Activated CD4-positive, alpha-beta memory T cell treated with anti-CD3 and anti-CD28 coated beads for 36 hours (primary cell): ENCODE measurements at regions of chr7 and their contacts with region 1.

Region 1: GRCh38 chr7:142459551-142459963 is 201.7 kb upstream of the PRSS58 start:
- DNase-seq: peak; percentile 49
- H3K4me3 Mint-ChIP-seq: no peak overlapping the region
- H3K27ac Mint-ChIP-seq: peak overlapping the region; percentile 39
- H3K4me1 Mint-ChIP-seq: peaks cover 59% of the 10 kb centered on the region
- H3K27me3 Mint-ChIP-seq: no peaks in the 10 kb centered on the region

Region 2: GRCh38 chr7:142359694-142360279 is 99.8 kb before region 1 on chr7:
- CTCF ChIA-PET with region 1: no interaction called
- POLR2A ChIA-PET with region 1: no interaction called
- intact Hi-C with region 1: no loop called
- DNase-seq: no peak
- H3K4me3 Mint-ChIP-seq: no peak overlapping the region
- H3K27ac Mint-ChIP-seq: no peak overlapping the region
- H3K4me1 Mint-ChIP-seq: peaks cover 27% of the 10 kb centered on the region
- H3K27me3 Mint-ChIP-seq: peaks cover 5% of the 10 kb centered on the region

Region 3: GRCh38 chr7:142438235-142438922 is 21.2 kb before region 1 on chr7:
- CTCF ChIA-PET with region 1: interaction called, 10 read pairs
- POLR2A ChIA-PET with region 1: no interaction called
- intact Hi-C with region 1: loop called (anchors 2 kb)
- DNase-seq: peak; percentile 45
- H3K4me3 Mint-ChIP-seq: no peak overlapping the region
- H3K27ac Mint-ChIP-seq: no peak overlapping the region
- H3K4me1 Mint-ChIP-seq: peaks cover 55% of the 10 kb centered on the region
- H3K27me3 Mint-ChIP-seq: no peaks in the 10 kb centered on the region

Region 4: GRCh38 chr7:142469696-142470543 is 10.4 kb after region 1 on chr7:
- CTCF ChIA-PET with region 1: interaction called, 324 read pairs
- POLR2A ChIA-PET with region 1: no interaction called
- intact Hi-C with region 1: no loop called
- DNase-seq: no peak
- H3K4me3 Mint-ChIP-seq: no peak overlapping the region
- H3K27ac Mint-ChIP-seq: no peak overlapping the region
- H3K4me1 Mint-ChIP-seq: peaks cover 45% of the 10 kb centered on the region
- H3K27me3 Mint-ChIP-seq: no peaks in the 10 kb centered on the region

Region 5: DNA sequence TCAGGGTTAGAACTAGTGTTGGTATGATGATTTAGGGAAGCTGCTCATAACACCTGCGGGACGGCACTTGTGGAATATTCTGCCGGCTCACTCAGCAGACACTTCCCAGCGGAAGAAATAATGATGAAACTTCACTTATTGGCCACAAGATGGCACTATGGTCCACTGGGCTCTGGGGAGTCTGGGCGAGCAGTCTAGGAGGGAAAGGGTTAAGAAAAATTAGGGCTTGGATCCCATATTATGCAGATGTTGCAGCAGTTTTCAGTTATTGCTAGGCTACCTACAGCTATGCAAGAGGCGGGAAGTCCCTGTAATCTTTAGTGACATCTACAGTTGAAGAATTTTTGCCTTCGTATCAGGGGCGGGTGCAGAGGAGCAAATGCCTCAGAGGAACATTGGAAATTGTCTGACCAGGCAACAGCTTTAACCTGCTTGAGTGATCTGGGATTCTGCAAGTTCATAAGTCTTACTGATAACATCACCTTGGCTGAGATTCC is 37.0 kb after region 1 on chr7:
- CTCF ChIA-PET with region 1: interaction called, 19 read pairs
- POLR2A ChIA-PET with region 1: no interaction called
- intact Hi-C with region 1: loop called (anchors 5 kb)
- DNase-seq: peak; percentile 39
- H3K4me3 Mint-ChIP-seq: peak overlapping the region; percentile 47
- H3K27ac Mint-ChIP-seq: peak overlapping the region; percentile 7
- H3K4me1 Mint-ChIP-seq: peaks cover 34% of the 10 kb centered on the region
- H3K27me3 Mint-ChIP-seq: no peaks in the 10 kb centered on the region